ENCODE measurements at regions of chr2 and their contacts with region 1.

Region 1: GRCh38 chr2:151437630-151438029 is 27.9 kb downstream of the RIF1 start:
- DNase-seq: no peak
- H3K4me3 Mint-ChIP-seq: no peak overlapping the region
- H3K27ac Mint-ChIP-seq: no peak overlapping the region
- H3K4me1 Mint-ChIP-seq: no peaks in the 10 kb centered on the region
- H3K27me3 Mint-ChIP-seq: no peaks in the 10 kb centered on the region

Region 2: DNA sequence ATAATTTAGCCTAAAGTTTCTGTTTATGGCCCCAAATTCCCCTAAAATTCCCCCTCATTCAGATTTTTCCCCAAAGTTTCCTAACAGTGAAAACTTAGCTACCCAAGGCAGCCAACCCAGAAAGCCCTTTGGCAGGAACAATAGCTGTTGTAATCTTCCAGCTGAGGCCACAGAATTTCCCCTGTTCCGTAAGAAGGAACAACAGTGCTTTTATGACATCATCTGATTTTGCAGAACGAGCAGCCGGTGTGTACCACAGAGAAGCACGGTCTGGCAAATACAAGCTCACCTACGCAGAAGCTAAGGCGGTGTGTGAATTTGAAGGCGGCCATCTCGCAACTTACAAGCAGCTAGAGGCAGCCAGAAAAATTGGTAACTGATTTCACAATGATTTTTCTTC is 73.9 kb before region 1 on chr2:
- CTCF ChIA-PET with region 1: no interaction called
- POLR2A ChIA-PET with region 1: no interaction called
- intact Hi-C with region 1: no loop called
- DNase-seq: no peak
- H3K4me3 Mint-ChIP-seq: no peak overlapping the region
- H3K27ac Mint-ChIP-seq: no peak overlapping the region
- H3K4me1 Mint-ChIP-seq: peaks cover 3% of the 10 kb centered on the region
- H3K27me3 Mint-ChIP-seq: no peaks in the 10 kb centered on the region

Region 3: GRCh38 chr2:151374426-151374825 is 63.2 kb before region 1 on chr2:
- CTCF ChIA-PET with region 1: no interaction called
- POLR2A ChIA-PET with region 1: no interaction called
- intact Hi-C with region 1: no loop called
- DNase-seq: no peak
- H3K4me3 Mint-ChIP-seq: no peak overlapping the region
- H3K27ac Mint-ChIP-seq: no peak overlapping the region
- H3K4me1 Mint-ChIP-seq: peaks cover 8% of the 10 kb centered on the region
- H3K27me3 Mint-ChIP-seq: peaks cover 6% of the 10 kb centered on the region

Region 4: GRCh38 chr2:151409601-151410484 is 27.8 kb before region 1 on chr2 and contains the start of gene RIF1:
- CTCF ChIA-PET with region 1: interaction called, 10 read pairs
- POLR2A ChIA-PET with region 1: no interaction called
- intact Hi-C with region 1: no loop called
- DNase-seq: peak; percentile 89
- H3K4me3 Mint-ChIP-seq: peak within 1 kb of the TSS; percentile 90
- H3K27ac Mint-ChIP-seq: peak within 1 kb of the TSS; percentile 83
- H3K4me1 Mint-ChIP-seq: peaks cover 24% of the 10 kb centered on the region
- H3K27me3 Mint-ChIP-seq: no peaks in the 10 kb centered on the region
- total RNA-seq, gene RIF1: 56.8 to 59.2 TPM

Region 5: GRCh38 chr2:151422917-151423439 is 14.7 kb before region 1 on chr2:
- CTCF ChIA-PET with region 1: interaction called, 11 read pairs
- POLR2A ChIA-PET with region 1: no interaction called
- intact Hi-C with region 1: no loop called
- DNase-seq: no peak
- H3K4me3 Mint-ChIP-seq: no peak overlapping the region
- H3K27ac Mint-ChIP-seq: peak overlapping the region; percentile 74
- H3K4me1 Mint-ChIP-seq: peaks cover 39% of the 10 kb centered on the region
- H3K27me3 Mint-ChIP-seq: no peaks in the 10 kb centered on the region

Region 6: DNA sequence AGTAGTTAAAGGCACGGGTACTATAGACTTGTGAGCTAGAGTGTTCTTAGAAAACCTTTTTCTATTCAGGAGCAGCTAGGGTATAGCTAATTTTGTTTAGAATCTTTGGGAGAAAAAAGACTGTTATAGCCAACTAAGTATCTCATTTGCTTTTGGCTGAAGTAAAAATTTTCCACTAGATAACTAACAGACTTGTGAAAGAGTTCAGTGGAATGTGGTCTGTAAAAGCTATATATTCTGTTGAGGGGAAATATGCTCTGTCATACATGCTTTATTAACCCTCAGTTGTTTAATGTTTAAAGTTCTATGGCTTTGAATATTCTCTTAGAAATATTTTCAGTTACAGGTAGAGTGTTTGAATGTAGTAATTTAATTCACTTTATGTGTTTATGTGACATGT is 21.7 kb after region 1 on chr2:
- CTCF ChIA-PET with region 1: interaction called, 18 read pairs
- POLR2A ChIA-PET with region 1: no interaction called
- intact Hi-C with region 1: no loop called
- DNase-seq: no peak
- H3K4me3 Mint-ChIP-seq: no peak overlapping the region
- H3K27ac Mint-ChIP-seq: no peak overlapping the region
- H3K4me1 Mint-ChIP-seq: no peaks in the 10 kb centered on the region
- H3K27me3 Mint-ChIP-seq: no peaks in the 10 kb centered on the region

Region 7: DNA sequence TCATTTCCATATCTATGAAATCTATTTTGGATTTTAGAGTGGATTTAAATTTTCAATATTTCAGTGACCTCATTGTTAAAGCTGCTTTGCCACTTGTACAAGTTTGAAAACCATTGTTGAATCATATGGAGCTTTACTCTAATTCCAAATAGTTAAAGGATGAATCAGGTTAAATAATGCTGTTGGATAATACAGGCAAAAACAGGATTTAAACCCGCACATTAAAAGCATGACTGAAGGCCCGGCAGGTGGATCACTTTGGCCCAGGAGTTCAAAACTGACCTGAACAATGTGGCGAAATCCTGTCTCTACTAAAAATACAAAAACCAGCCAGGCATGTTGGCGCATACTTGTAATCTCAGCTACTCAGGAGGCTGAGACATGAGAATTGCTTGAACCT is 40.4 kb after region 1 on chr2:
- CTCF ChIA-PET with region 1: no interaction called
- POLR2A ChIA-PET with region 1: no interaction called
- intact Hi-C with region 1: no loop called
- DNase-seq: no peak
- H3K4me3 Mint-ChIP-seq: no peak overlapping the region
- H3K27ac Mint-ChIP-seq: no peak overlapping the region
- H3K4me1 Mint-ChIP-seq: peaks cover 23% of the 10 kb centered on the region
- H3K27me3 Mint-ChIP-seq: no peaks in the 10 kb centered on the region

Measured in activated CD4-positive, alpha-beta memory T cell treated with anti-CD3 and anti-CD28 coated beads for 36 hours (primary cell).